HCT116 (cell line): ENCODE measurements at regions of chr14 and their contacts with region 1.

Region 1: DNA sequence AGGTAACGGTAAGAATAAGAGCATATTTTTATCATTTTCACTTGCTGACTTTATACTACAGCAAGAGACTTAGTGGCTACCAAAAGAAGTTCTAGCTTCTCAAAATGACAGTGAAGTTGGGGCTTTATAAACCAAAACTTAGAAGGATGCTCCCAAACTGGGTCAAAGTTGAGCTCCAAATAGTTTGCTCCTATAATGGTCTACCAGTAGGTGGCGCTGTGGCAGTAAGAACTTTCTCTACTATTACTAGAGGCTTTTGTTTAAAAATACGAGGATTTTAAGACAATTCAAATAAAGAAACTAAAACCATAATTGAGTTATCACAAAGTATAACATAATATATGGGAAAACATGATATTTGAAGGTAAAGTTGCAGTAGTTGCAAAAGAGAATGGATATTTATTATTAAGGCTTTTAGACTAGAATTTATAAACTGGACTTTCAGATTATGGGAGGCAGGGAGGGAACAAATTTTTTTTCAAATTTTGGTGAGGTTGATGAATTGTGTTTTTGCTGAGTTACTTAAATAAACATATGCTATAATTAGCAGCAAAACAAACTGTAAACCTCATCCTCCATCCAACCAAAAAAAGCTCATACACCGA is 75.0 kb downstream of the TGFB3 start:
- DNase-seq: peak; percentile 21
- ATAC-seq: peak; percentile 69
- H3K4me3 ChIP-seq: no peak overlapping the region
- H3K27ac ChIP-seq: no peak overlapping the region
- H3K4me1 ChIP-seq: 0 out of 4 replicates have a peak, but pooled peaks cover 0 to 6% of the 10 kb centered on the region in 2 experiments
- H3K27me3 ChIP-seq: no peaks in the 10 kb centered on the region
- CTCF ChIP-seq: peak; percentile 45 to 95 (median 79); a peak in 5 of 6 replicates
- POLR2A ChIP-seq: no peak
- RAD21 ChIP-seq: peak; percentile 64

Region 2: DNA sequence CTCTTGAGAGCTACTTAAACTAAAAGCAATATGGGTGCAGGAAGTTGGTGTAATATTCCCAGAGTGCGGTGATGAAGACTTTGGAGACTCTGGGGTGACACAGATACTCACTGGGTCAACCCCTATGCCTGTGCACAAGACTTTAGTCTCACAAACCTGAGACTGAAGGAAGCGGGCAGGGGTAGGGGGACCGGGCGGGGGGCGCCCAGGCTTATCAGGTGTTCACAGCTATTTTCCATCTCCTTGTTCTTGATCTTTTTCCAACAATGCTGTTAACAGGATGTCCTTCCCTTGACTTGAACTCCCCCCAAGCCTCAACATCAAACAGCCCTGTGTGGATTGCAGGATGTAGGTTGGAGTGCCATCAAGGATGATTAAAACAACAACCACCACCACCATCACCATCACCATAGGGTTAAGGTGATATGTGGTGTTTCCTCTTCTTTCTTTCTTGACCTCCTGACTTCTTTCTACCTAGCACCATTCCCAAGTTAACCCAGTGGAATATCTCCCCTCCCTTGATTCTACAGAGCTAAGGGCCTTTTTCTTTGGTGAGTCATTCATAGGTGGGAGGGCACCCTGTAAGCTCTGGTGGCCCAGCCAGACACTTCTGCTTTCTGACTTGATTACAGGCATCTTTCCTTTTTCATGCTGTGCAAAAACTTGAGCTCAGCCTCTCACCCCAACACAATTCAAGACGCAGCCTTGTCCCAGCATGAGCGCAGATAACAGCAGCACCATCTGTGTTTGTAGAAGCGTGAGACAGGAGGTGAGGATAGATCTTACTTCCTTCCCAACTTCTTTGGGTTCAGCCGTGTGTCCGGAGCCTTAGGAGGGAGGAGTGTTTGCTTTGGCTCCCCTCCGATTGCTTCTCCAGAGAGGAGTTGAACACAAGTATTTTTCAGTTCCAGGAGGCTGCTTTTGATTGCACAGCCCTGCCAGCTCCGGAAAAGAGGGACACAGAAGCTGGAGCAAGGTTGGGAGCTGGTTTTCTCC is 301.6 kb before region 1 on chr14:
- CTCF ChIA-PET with region 1: no interaction called
- POLR2A ChIA-PET with region 1: no interaction called
- RAD21 ChIA-PET with region 1: no interaction called
- intact Hi-C with region 1: no loop called
- DNase-seq: no peak
- ATAC-seq: no peak
- H3K4me3 ChIP-seq: no peak overlapping the region
- H3K27ac ChIP-seq: no peak overlapping the region
- H3K4me1 ChIP-seq: peaks cover 0 to 3% of the 10 kb centered on the region in 2 experiments; a peak in 1 of 4 replicates
- H3K27me3 ChIP-seq: 0 out of 2 replicates have a peak, but pooled peaks cover 6% of the 10 kb centered on the region
- CTCF ChIP-seq: no peak
- POLR2A ChIP-seq: no peak
- RAD21 ChIP-seq: no peak

Region 3: GRCh38 chr14:75864352-75864751 is 42.4 kb before region 1 on chr14:
- CTCF ChIA-PET with region 1: interaction called, 11 read pairs
- POLR2A ChIA-PET with region 1: no interaction called
- RAD21 ChIA-PET with region 1: no interaction called
- intact Hi-C with region 1: no loop called
- DNase-seq: no peak
- ATAC-seq: no peak
- H3K4me3 ChIP-seq: no peak overlapping the region
- H3K27ac ChIP-seq: no peak overlapping the region
- H3K4me1 ChIP-seq: peaks cover 35 to 59% of the 10 kb centered on the region in 2 experiments
- H3K27me3 ChIP-seq: no peaks in the 10 kb centered on the region
- CTCF ChIP-seq: no peak
- POLR2A ChIP-seq: no peak
- RAD21 ChIP-seq: no peak

Region 4: DNA sequence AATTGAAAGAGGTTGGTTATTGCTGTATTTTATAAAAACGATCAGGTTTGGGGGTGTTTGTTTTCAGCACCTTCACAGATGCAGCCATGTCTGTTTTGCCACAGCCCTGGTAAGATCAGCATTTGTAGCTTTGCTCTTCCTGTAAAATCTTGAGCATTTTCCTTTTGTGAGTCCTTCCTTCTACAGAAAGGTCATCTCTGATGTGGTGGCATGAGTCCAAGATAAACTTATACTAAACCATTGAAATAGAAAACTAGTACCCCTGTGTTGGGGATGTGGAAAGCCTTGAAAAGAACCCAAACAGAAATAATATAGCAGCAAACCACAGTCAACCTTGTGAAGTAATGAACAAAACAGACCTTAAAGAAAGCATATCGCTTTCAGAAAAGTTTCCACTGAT is 10.4 kb before region 1 on chr14:
- CTCF ChIA-PET with region 1: interaction called, 30 read pairs
- POLR2A ChIA-PET with region 1: no interaction called
- RAD21 ChIA-PET with region 1: no interaction called
- intact Hi-C with region 1: no loop called
- DNase-seq: no peak
- ATAC-seq: no peak
- H3K4me3 ChIP-seq: no peak overlapping the region
- H3K27ac ChIP-seq: no peak overlapping the region
- H3K4me1 ChIP-seq: peaks cover 5 to 8% of the 10 kb centered on the region in 2 experiments; a peak in 2 of 4 replicates
- H3K27me3 ChIP-seq: no peaks in the 10 kb centered on the region
- CTCF ChIP-seq: no peak
- POLR2A ChIP-seq: no peak
- RAD21 ChIP-seq: no peak

Region 5: DNA sequence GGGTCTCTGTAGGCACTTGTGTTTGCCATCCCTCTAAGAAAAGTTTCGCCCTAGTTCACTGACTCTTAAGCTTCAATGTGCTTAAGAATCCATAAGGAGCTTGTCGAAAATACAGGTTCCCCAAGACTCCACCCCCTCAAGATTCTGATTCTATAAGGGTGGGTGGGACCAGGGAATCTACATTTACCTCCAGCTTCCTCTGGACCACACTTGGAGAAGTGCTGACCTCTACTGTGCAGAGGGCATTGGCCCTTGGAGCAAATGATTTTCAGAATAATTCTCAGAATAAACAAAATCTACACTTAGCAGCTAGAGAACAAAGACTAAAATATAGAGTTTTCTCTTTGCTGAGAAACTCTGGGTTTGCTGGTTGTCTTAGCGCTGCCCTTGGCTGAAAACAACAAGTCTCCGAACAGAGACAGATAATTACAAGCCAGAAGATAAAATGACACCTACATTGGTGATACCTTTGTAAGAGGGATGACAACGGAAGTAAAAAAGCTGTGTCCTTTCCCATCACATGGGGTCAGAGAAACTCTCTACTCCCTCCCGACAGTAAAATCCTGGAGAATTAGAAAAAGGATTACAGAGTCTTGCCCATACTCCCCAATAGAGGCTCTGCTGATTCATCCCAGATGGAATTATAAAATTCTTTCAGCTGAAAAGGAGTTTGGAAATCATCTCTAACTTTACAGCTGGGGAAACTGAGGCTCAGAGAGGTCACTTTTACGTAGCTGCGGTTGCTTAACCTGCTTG is 70.2 kb after region 1 on chr14:
- CTCF ChIA-PET with region 1: interaction called, 37 read pairs
- POLR2A ChIA-PET with region 1: no interaction called
- RAD21 ChIA-PET with region 1: interaction called, 4 to 9 read pairs
- intact Hi-C with region 1: loop called (anchors 2 kb)
- DNase-seq: no peak
- ATAC-seq: no peak
- H3K4me3 ChIP-seq: no peak overlapping the region
- H3K27ac ChIP-seq: no peak overlapping the region
- H3K4me1 ChIP-seq: peaks cover 6 to 9% of the 10 kb centered on the region in 2 experiments
- H3K27me3 ChIP-seq: no peaks in the 10 kb centered on the region
- CTCF ChIP-seq: peak in 1 of 3 experiments; percentile 23; a peak in 1 of 6 replicates
- POLR2A ChIP-seq: no peak
- RAD21 ChIP-seq: peak; percentile 52

Region 6: DNA sequence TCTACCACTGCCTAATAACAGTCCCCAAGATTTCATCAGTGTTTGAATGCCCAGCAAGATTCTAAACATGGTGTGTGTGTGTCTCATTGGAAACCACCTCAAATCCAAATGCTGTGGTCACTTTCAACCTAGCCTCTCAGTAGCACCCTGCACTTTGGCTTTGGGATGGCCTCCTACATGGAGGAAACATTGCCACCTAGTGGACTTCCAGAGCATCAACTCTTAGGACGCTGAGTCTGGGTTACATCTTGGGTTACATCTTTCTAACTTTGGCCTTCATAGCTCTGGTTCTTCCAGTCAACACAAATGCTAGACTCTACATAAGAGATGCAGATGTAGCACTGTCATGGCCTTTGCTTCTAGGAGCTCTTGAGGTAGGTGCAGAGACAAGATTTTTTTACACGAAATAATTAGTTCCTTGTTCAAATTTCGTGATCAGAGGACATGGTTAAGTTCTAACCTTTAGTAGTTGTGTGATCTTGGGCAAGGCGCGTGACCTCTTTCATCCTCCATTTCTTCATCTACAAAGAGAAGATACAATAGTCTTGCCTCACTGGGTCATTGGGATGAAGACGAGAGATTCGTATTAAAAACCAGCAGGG is 741.0 kb after region 1 on chr14:
- CTCF ChIA-PET with region 1: interaction called, 3 read pairs
- POLR2A ChIA-PET with region 1: no interaction called
- RAD21 ChIA-PET with region 1: no interaction called
- intact Hi-C with region 1: loop called (anchors 10 kb)
- DNase-seq: peak; percentile 48
- ATAC-seq: peak; percentile 88
- H3K4me3 ChIP-seq: no peak overlapping the region
- H3K27ac ChIP-seq: no peak overlapping the region
- H3K4me1 ChIP-seq: no peaks in the 10 kb centered on the region
- H3K27me3 ChIP-seq: peaks cover 5% of the 10 kb centered on the region; the same call in 1 of the 2 replicates
- CTCF ChIP-seq: peak; percentile 39 to 91 (median 86); a peak in 5 of 6 replicates
- POLR2A ChIP-seq: no peak
- RAD21 ChIP-seq: peak; percentile 72